Activated CD4-positive, alpha-beta T cell treated with anti-CD3 and anti-CD28 coated beads for 36 hours (primary cell): ENCODE measurements at regions of chr10 and their contacts with region 1.

Region 1: DNA sequence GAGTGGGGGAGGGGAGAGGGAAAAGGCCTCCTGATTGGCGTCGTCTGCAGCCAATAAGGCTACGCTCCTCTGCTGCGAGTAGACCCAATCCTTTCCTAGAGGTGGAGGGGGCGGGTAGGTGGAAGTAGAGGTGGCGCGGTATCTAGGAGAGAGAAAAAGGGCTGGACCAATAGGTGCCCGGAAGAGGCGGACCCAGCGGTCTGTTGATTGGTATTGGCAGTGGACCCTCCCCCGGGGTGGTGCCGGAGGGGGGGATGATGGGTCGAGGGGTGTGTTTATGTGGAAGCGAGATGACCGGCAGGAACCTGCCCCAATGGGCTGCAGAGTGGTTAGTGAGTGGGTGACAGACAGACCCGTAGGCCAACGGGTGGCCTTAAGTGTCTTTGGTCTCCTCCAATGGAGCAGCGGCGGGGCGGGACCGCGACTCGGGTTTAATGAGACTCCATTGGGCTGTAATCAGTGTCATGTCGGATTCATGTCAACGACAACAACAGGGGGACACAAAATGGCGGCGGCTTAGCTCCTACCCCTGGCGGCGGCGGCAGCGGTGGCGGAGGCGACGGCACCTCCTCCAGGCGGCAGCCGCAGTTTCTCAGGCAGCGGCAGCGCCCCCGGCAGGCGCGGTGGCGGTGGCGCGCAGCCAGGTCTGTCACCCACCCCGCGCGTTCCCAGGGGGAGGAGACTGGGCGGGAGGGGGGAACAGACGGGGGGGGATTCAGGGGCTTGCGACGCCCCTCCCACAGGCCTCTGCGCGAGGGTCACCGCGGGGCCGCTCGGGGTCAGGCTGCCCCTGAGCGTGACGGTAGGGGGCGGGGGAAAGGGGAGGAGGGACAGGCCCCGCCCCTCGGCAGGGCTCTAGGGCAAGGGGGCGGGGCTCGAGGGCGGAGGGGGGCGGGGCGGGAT is at the start of gene KAT6B:
- DNase-seq: peak; percentile 100
- ATAC-seq: peak; percentile 89
- H3K4me3 Mint-ChIP-seq: peak within 1 kb of the TSS; percentile 88
- H3K27ac Mint-ChIP-seq: peak within 1 kb of the TSS; percentile 84
- H3K4me1 Mint-ChIP-seq: peaks cover 70% of the 10 kb centered on the region
- H3K27me3 Mint-ChIP-seq: no peaks in the 10 kb centered on the region
- total RNA-seq, gene KAT6B: 20.0 to 20.9 TPM

Region 2: DNA sequence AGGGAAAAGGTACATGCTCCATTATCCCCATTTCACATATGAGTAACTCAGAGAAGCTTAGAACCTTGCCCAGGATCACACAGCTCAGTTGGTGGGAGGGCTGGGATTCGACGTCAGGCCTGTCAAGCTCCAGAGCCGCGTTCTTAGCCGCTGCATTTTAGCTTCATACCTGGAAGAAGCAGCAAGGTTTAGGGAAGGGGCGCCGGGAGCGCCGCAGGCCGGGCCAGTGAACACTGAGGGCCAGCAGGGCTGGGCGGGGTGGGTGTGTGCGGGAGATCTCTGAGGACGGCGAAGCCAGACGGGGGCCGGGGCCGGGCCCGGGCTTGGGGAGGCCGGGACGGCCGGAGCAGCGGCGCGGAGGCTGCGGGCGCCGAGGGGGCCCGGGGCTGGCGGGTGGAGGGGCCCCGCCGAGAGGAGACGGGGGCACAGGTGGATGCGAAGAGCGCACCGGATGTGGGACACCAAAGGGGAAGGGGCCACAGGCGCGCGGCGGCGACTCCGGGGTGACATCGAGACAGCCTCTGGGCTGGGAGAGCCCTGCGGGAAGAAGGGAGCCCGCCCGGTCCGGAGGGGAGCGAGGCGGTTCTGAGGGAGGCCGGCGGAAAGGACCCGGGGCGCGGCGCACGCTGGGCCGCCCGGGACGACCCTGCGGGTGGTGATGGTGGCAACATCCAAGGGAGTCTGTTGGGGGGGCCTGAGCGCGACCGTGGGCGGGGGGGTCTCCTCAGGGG is 1015.5 kb before region 1 on chr10:
- CTCF ChIA-PET with region 1: no interaction called
- POLR2A ChIA-PET with region 1: no interaction called
- intact Hi-C with region 1: loop called in 1 of 2 experiments (anchors 1 kb)
- DNase-seq: peak; percentile 72
- ATAC-seq: peak; percentile 22
- H3K4me3 Mint-ChIP-seq: peak overlapping the region; percentile 78
- H3K27ac Mint-ChIP-seq: peak overlapping the region; percentile 91
- H3K4me1 Mint-ChIP-seq: peaks cover 42% of the 10 kb centered on the region
- H3K27me3 Mint-ChIP-seq: no peaks in the 10 kb centered on the region

Region 3: DNA sequence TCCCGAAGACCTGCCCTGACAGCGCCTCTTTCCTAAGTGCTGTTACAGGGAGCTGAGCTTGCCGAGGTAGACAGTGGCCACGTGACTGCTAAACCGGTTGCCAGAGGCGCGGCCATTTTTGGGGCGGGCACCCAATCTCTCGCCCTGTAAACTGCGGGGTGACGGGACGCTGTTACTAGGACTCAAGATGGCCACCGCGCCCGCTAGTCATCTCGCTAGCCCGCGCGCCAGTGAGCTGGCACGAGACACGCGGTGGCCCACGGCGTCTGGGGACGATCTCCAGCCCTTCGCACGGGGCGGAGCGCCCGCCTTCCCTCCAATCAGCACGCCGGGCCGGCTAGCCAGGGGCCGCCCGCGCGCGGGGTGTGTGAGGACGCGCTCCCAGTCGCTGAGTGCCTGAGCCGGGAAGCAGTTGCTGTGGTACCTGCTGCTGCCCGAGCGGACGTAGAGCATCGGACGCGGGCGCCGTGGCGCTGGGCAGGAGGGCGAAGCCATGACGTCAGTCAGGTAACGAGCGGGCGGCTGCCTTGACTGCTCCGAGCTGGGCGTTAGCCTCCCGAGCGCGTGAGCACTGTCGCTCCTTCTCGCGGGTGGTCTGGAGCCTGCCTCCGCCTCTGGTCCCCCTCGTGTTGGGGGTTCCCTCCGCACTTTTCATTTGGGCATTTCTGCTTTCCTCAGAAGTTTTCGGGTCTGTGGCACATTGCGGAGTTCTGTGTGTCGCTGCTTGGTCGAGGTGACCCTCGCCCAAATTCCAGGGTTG is 649.8 kb before region 1 on chr10:
- CTCF ChIA-PET with region 1: no interaction called
- POLR2A ChIA-PET with region 1: no interaction called
- intact Hi-C with region 1: loop called in 1 of 2 experiments (anchors 1 kb)
- DNase-seq: peak; percentile 98
- ATAC-seq: peak; percentile 94
- H3K4me3 Mint-ChIP-seq: peak overlapping the region; percentile 89
- H3K27ac Mint-ChIP-seq: peak overlapping the region; percentile 95
- H3K4me1 Mint-ChIP-seq: peaks cover 37% of the 10 kb centered on the region
- H3K27me3 Mint-ChIP-seq: no peaks in the 10 kb centered on the region

Region 4: GRCh38 chr10:74669210-74669609 is 157.2 kb before region 1 on chr10:
- CTCF ChIA-PET with region 1: no interaction called
- POLR2A ChIA-PET with region 1: no interaction called
- intact Hi-C with region 1: no loop called
- DNase-seq: no peak
- ATAC-seq: no peak
- H3K4me3 Mint-ChIP-seq: no peak overlapping the region
- H3K27ac Mint-ChIP-seq: no peak overlapping the region
- H3K4me1 Mint-ChIP-seq: no peaks in the 10 kb centered on the region
- H3K27me3 Mint-ChIP-seq: no peaks in the 10 kb centered on the region

Region 5: DNA sequence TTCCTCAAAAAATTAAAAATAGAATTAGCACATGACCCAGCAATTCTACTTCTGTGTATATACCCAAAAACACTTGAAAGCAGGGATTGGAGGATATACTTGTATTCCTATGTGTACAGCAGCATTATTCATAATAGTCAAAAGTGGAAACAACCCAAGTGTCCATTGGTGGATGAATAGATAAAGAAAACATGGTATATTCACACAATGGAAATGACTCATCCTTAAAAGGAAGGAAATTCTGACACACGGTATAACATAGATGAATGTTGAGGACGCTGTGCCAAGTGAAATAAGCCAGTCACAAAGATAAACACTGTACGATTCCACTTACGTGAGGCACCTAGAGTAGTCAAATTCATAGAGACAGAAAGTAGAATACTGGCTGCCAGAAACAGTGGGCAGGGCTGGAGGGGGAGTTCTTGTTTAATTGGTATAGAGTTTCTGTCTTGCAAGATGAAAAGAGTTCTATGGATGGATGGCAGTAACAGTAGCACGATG is 26.6 kb before region 1 on chr10:
- CTCF ChIA-PET with region 1: no interaction called
- POLR2A ChIA-PET with region 1: no interaction called
- intact Hi-C with region 1: loop called in 1 of 2 experiments (anchors 1 kb)
- DNase-seq: peak; percentile 71
- ATAC-seq: peak; percentile 99
- H3K4me3 Mint-ChIP-seq: no peak overlapping the region
- H3K27ac Mint-ChIP-seq: peak overlapping the region; percentile 24
- H3K4me1 Mint-ChIP-seq: peaks cover 11% of the 10 kb centered on the region
- H3K27me3 Mint-ChIP-seq: no peaks in the 10 kb centered on the region

Region 6: DNA sequence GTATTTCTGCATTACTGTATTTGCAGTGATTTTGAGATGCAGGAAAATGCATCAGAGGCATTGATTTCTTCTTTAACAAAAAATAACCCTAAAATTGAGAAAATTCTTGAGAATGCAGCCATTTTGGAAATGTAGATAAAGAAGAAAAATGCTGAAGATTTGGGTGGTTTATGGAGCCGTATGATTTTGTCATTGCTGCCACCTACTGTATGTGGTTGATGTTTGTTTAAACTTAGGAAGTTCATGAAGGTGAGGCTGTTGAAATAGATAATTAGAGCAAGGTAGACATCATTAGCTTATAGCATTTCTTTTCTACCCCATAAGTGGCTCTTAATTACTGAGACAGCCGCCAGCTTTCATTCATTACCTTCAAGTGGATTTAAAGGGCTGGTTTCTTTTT is 193.0 kb after region 1 on chr10:
- CTCF ChIA-PET with region 1: interaction called, 4 read pairs
- POLR2A ChIA-PET with region 1: interaction called, 7 read pairs
- intact Hi-C with region 1: loop called in 1 of 2 experiments (anchors 1 kb)
- DNase-seq: no peak
- ATAC-seq: peak; percentile 34
- H3K4me3 Mint-ChIP-seq: no peak overlapping the region
- H3K27ac Mint-ChIP-seq: no peak overlapping the region
- H3K4me1 Mint-ChIP-seq: peaks cover 31% of the 10 kb centered on the region
- H3K27me3 Mint-ChIP-seq: no peaks in the 10 kb centered on the region

Region 7: DNA sequence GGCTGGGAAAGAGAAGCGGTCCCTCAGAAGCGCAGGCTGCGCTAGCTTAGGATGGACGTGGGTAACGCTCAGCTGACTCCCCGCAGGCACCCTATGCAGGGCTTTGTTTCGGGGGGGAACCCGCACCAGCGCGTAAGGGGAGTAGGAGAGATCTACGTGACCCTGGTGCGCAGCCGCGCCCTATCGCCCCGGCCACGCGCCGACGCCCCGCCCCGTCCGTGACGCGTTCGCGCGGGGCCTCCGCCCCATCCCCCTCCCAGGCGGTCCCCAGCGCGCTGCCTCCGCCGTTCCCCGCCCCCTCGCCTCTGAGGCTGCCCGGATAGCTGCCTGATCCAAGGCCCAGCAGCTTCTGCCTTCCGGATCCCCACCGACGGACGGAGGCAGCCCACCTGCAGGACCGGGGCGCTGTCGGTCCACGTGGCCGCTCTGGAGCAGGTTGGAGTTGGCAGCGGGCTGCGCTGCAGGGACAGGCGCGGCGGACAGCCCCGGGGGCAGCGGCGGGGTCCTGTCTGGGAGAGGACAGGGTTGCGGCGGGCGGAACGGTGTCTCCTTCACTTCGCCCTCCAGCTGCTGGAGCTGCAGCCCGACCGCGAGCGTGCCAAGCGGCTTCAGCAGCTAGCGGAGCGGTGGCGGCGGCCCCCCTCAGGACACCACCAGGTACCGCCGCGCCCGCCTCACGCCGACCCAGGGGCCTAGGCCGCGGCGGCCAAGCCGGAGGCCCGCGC is 384.1 kb after region 1 on chr10 and contains the start of gene VDAC2:
- CTCF ChIA-PET with region 1: no interaction called
- POLR2A ChIA-PET with region 1: interaction called, 3 read pairs
- intact Hi-C with region 1: loop called in 1 of 2 experiments (anchors 1 kb)
- DNase-seq: peak; percentile 96
- ATAC-seq: peak; percentile 83
- H3K4me3 Mint-ChIP-seq: peak within 1 kb of the TSS; percentile 89
- H3K27ac Mint-ChIP-seq: peak within 1 kb of the TSS; percentile 100
- H3K4me1 Mint-ChIP-seq: peaks cover 40% of the 10 kb centered on the region
- H3K27me3 Mint-ChIP-seq: no peaks in the 10 kb centered on the region
- total RNA-seq, gene VDAC2: 122 to 233 TPM